ENCODE measurements at regions of chr12 and their contacts with region 1.

Region 1: GRCh38 chr12:101697197-101697929 is at the start of gene CHPT1:
- DNase-seq: peak; percentile 85
- H3K4me3 Mint-ChIP-seq: peak within 1 kb of the TSS; percentile 89
- H3K27ac Mint-ChIP-seq: peak within 1 kb of the TSS; percentile 78
- H3K4me1 Mint-ChIP-seq: peaks cover 18% of the 10 kb centered on the region
- H3K27me3 Mint-ChIP-seq: peaks cover 23% of the 10 kb centered on the region
- total RNA-seq, gene CHPT1: 13.9 and 15.3 TPM in 2 replicates

Region 2: GRCh38 chr12:101407436-101408345 is 289.7 kb before region 1 on chr12 and contains the start of gene ARL1:
- intact Hi-C with region 1: loop called (anchors 2 kb)
- DNase-seq: peak; percentile 93
- H3K4me3 Mint-ChIP-seq: peak within 1 kb of the TSS; percentile 100
- H3K27ac Mint-ChIP-seq: peak within 1 kb of the TSS; percentile 100
- H3K4me1 Mint-ChIP-seq: peaks cover 22% of the 10 kb centered on the region
- H3K27me3 Mint-ChIP-seq: peaks cover 10% of the 10 kb centered on the region
- total RNA-seq, gene ARL1: 77.6 and 85.4 TPM in 2 replicates

Region 3: DNA sequence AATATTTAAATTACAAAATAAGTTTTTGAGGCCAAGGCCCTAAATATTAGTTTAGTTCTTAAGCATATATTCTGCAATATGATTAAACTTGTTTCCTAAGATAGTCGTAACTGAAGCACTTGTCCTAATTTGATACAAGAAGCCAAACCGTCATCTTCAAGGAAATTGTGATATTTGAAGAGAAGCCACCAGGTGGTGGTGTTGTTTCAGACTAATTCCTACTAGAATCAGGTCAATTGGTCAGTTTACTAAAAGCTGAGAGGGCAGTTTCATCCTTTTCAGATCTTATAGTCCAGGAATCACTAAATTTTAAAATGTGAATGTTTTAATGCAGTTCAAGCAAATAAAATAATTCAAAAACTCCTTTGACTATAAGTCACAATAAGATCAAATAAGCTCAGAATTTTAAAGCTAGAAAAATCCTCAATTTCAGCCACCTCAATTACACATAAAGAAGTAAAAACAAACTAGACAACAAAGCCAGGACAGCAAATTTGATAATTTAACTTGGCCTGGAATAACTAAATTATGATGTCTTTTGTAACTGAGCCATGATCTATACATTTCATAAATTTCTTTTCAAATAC is 282.7 kb before region 1 on chr12:
- intact Hi-C with region 1: loop called (anchors 2 kb)
- DNase-seq: peak; percentile 74
- H3K4me3 Mint-ChIP-seq: no peak overlapping the region
- H3K27ac Mint-ChIP-seq: no peak overlapping the region
- H3K4me1 Mint-ChIP-seq: no peaks in the 10 kb centered on the region
- H3K27me3 Mint-ChIP-seq: peaks cover 22% of the 10 kb centered on the region

Region 4: DNA sequence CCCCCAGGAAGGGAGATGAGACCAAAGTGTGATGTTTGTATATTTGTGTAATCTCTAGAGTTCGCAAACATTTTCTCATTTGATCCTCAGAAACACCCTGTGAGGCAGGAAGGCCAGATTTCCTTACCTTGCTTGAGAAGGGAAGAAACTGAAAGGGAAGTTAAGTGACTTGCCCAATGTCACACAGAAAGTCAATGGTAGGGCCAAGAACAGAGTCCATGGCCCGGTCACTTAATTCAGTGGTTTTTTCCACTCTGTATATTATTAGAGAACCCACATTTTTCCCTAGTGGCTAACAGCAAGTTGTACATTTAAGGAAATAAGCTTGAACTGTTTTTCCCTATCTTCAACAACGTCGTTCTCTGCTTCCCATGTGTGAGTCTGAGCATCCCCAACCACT is 25.5 kb before region 1 on chr12:
- intact Hi-C with region 1: loop called (anchors 2 kb)
- DNase-seq: no peak
- H3K4me3 Mint-ChIP-seq: peak overlapping the region; percentile 31
- H3K27ac Mint-ChIP-seq: no peak overlapping the region
- H3K4me1 Mint-ChIP-seq: peaks cover 15% of the 10 kb centered on the region
- H3K27me3 Mint-ChIP-seq: peaks cover 2% of the 10 kb centered on the region

Region 5: DNA sequence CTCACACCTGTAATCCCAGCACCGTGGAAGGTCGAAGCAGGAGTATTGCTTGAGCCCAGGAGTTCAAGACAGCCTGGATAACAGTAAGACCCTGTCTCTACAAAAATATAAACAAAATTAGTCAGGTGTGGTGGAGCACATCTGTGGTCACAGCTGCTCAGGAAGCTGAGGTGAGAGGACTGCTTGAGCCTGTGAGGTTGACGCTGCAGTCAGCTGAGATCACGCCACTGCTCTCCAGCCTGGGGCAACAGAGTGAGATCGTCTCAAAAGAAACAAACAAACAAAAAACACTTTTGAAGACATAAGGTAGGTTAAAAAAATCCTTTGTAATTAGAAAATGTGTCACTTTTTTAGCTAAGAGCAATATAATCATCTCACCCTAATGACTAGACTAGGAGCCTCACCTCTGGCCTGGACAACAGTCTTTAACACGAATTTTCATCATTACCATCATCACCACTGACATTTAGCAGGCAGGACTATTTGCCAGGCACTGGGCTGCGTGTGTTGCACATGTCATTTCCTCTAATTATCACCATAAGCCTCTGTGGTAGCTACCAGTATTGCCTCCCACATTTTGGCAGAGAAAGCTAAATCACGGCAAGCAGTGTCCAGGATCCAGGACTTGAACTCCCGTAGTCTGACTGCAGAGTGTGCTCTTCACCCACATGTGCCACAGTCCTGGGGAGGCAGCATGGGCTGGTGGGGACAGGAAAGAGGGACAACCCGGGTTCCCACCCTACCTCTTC is 46.5 kb after region 1 on chr12:
- intact Hi-C with region 1: loop called (anchors 5 kb)
- DNase-seq: peak; percentile 55
- H3K4me3 Mint-ChIP-seq: no peak overlapping the region
- H3K27ac Mint-ChIP-seq: no peak overlapping the region
- H3K4me1 Mint-ChIP-seq: peaks cover 4% of the 10 kb centered on the region
- H3K27me3 Mint-ChIP-seq: no peaks in the 10 kb centered on the region